ENCODE measurements at regions of chr12 and their contacts with region 1.

Region 1: GRCh38 chr12:18430425-18431048 is 169.2 kb downstream of the PIK3C2G start:
- DNase-seq: peak; percentile 70
- H3K4me3 Mint-ChIP-seq: no peak overlapping the region
- H3K27ac Mint-ChIP-seq: no peak overlapping the region
- H3K4me1 Mint-ChIP-seq: peaks cover 10% of the 10 kb centered on the region
- H3K27me3 Mint-ChIP-seq: no peaks in the 10 kb centered on the region
- CTCF ChIP-seq: peak; percentile 91

Region 2: GRCh38 chr12:18250313-18250916 is 180.1 kb before region 1 on chr12:
- CTCF ChIA-PET with region 1: interaction called, 4 read pairs
- POLR2A ChIA-PET with region 1: no interaction called
- intact Hi-C with region 1: loop called (anchors 1 kb)
- DNase-seq: peak; percentile 73
- H3K4me3 Mint-ChIP-seq: no peak overlapping the region
- H3K27ac Mint-ChIP-seq: no peak overlapping the region
- H3K4me1 Mint-ChIP-seq: no peaks in the 10 kb centered on the region
- H3K27me3 Mint-ChIP-seq: no peaks in the 10 kb centered on the region
- CTCF ChIP-seq: peak; percentile 56

Region 3: DNA sequence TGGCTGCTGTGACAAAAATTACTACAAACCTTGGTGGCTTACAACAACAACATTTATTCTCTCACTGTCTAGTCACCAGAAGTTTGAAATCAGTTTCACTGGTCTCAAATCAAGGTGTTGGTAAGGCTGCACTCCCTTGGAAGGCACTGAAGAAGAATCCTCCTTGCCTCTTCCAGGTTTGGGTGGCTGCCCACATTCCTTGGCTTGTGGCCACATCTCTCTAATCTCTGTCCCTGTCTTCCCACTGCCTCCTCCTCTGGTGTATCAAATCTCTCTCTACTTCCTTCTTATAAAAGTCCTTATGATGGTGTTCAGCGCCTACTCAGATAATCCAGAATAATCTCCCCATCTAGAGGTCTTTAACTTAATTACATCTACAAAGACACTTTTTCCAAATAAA is 276.3 kb after region 1 on chr12:
- CTCF ChIA-PET with region 1: no interaction called
- POLR2A ChIA-PET with region 1: no interaction called
- intact Hi-C with region 1: loop called (anchors 5 kb)
- DNase-seq: peak; percentile 23
- H3K4me3 Mint-ChIP-seq: no peak overlapping the region
- H3K27ac Mint-ChIP-seq: no peak overlapping the region
- H3K4me1 Mint-ChIP-seq: peaks cover 5% of the 10 kb centered on the region
- H3K27me3 Mint-ChIP-seq: no peaks in the 10 kb centered on the region
- CTCF ChIP-seq: no peak

Region 4: GRCh38 chr12:18719922-18720510 is 289.5 kb after region 1 on chr12:
- CTCF ChIA-PET with region 1: no interaction called
- POLR2A ChIA-PET with region 1: no interaction called
- intact Hi-C with region 1: no loop called
- DNase-seq: no peak
- H3K4me3 Mint-ChIP-seq: no peak overlapping the region
- H3K27ac Mint-ChIP-seq: no peak overlapping the region
- H3K4me1 Mint-ChIP-seq: peaks cover 17% of the 10 kb centered on the region
- H3K27me3 Mint-ChIP-seq: no peaks in the 10 kb centered on the region
- CTCF ChIP-seq: no peak

Region 5: DNA sequence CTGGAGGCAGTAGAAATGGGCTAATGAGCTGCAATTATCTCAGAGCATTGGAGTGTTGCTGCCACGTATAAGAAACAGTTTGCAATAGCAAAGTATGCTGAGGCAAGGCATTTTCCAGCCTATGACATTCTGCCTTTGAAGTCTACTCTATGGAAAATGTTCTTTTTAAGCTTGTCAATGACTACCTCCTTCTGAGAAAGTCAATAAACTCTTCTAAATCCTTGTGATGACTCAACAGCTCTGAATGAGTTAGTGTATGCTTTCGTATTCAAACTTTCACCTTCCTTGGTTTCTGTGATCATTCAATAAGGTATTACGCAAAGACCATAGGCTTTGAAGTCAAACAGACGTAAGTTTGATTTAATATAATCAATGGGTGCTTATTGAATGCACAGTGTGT is 418.5 kb after region 1 on chr12:
- CTCF ChIA-PET with region 1: interaction called, 3 read pairs
- POLR2A ChIA-PET with region 1: no interaction called
- intact Hi-C with region 1: loop called (anchors 5 kb)
- DNase-seq: peak; percentile 35
- H3K4me3 Mint-ChIP-seq: no peak overlapping the region
- H3K27ac Mint-ChIP-seq: no peak overlapping the region
- H3K4me1 Mint-ChIP-seq: no peaks in the 10 kb centered on the region
- H3K27me3 Mint-ChIP-seq: no peaks in the 10 kb centered on the region
- CTCF ChIP-seq: no peak

Region 6: GRCh38 chr12:18861287-18861858 is 430.8 kb after region 1 on chr12:
- CTCF ChIA-PET with region 1: interaction called, 3 read pairs
- POLR2A ChIA-PET with region 1: no interaction called
- intact Hi-C with region 1: loop called (anchors 5 kb)
- DNase-seq: peak; percentile 64
- H3K4me3 Mint-ChIP-seq: no peak overlapping the region
- H3K27ac Mint-ChIP-seq: no peak overlapping the region
- H3K4me1 Mint-ChIP-seq: peaks cover 15% of the 10 kb centered on the region
- H3K27me3 Mint-ChIP-seq: no peaks in the 10 kb centered on the region
- CTCF ChIP-seq: peak; percentile 78